ENCODE measurements at regions of chr2 and their contacts with region 1.

Region 1: DNA sequence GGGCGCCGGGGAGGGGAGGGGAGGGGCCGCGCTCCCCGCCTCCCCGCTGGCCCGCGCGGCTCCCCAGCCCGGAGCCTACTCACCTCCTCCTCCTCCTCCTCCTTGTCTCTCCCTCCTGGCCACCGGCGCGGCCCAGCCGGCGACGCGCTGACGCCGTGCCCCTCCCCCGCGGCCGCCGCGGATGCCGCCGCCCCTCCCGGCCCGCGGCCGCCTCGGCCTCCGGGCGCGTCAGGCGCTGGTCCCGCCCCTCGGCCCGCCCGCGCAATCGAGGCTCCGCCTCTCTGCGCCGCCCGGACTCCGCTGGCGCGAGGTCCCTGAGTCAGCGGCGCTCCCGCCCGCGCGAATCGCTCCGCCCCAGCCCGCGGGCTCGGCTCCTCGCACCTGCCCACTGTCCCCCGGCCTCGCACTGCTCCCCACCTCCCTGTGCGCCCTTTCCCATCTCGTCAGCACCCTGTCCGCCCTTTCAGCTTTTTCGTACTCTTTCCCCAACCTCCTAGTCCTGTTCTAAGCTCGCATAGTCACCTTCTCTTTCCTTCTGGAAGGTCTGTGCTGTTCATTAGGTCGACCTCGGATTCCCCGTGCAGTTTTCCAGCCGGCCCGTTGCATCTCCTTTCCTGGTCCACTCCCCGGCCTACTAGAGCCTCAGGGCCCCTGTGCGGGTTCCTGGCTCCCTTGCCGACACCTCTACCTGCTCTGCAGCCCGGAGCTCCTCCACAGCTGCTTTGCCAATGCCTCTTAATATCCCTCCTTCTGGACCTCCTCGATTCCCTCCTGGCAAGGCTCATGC is 187.4 kb downstream of the ZEB2 start:
- DNase-seq: peak; percentile 88
- H3K4me3 Mint-ChIP-seq: peak overlapping the region; percentile 85
- H3K27ac Mint-ChIP-seq: peak overlapping the region; percentile 95
- H3K4me1 Mint-ChIP-seq: peaks cover 46% of the 10 kb centered on the region
- H3K27me3 Mint-ChIP-seq: no peaks in the 10 kb centered on the region

Region 2: GRCh38 chr2:143730155-143730952 is 602.2 kb before region 1 on chr2:
- intact Hi-C with region 1: loop called (anchors 2 kb)
- DNase-seq: no peak
- H3K4me3 Mint-ChIP-seq: peak overlapping the region; percentile 9
- H3K27ac Mint-ChIP-seq: peak overlapping the region; percentile 67
- H3K4me1 Mint-ChIP-seq: peaks cover 24% of the 10 kb centered on the region
- H3K27me3 Mint-ChIP-seq: no peaks in the 10 kb centered on the region

Region 3: DNA sequence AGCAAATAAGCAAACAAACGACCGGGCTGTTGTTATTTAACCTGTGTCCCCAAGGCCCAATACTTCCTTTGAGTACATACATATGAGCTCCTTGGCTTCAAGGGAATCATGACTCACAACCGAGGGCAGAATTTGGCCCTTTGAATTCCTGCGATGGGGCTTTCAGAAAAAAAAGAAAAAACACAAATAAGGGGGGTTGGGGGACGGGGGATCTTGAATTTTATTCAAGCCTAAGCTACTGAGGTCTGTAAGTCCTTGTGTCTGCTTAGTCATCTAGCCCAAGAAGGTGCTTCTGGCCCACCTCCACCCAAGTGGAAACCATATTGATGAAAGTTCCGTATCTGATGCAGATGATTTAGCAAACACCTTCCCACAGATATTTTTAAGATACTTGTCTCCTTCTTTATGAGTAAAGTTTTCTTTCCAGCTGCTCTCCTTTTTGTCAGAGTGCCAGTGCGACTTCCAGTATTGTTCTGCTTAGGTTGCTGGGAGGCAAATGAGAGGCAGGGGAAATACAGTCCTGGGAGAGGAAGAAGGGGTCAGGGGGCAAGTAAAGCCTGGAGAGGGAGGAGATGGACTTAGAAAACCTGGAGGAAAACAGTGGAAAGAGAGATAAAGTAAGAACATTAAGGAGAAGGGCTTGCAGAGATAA is 17.7 kb after region 1 on chr2:
- intact Hi-C with region 1: loop called (anchors 2 kb)
- DNase-seq: no peak
- H3K4me3 Mint-ChIP-seq: peak overlapping the region; percentile 6
- H3K27ac Mint-ChIP-seq: peak overlapping the region; percentile 79
- H3K4me1 Mint-ChIP-seq: peaks cover 27% of the 10 kb centered on the region
- H3K27me3 Mint-ChIP-seq: no peaks in the 10 kb centered on the region

Region 4: DNA sequence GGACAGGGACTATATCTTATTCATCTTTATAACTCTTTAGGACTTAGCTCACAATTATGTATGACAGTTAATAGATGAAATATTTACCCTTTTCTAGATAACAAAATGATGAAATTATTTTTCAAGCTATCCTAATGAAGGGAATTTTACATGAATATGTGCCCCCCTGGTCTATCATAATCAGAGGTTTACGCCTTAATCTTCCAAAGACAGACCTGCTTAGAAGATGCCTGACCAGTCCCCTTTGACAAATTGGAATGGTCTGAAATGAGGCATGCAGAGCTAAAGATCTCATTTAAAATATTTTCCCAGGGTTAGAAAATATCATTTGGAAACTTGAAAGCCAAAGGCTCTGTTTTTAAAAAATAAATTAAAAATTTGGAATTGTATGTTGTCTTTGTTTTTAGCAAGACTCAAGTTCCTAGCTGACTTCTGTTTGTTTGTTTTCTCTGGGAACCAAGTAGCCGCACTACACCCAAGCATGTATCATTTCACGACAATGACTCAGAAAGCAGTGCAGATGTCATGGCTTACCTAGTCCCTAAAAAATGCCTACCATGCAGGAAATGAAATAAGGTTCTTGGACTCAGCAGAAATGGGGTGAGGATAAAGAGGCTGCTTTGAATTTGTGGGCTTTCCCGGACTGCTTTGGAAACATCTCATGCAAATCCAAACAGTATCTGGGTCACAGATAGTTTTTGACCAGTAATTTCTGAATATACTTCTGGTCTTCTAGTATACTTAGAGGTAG is 25.2 kb after region 1 on chr2:
- intact Hi-C with region 1: loop called (anchors 2 kb)
- DNase-seq: no peak
- H3K4me3 Mint-ChIP-seq: no peak overlapping the region
- H3K27ac Mint-ChIP-seq: peak overlapping the region; percentile 56
- H3K4me1 Mint-ChIP-seq: peaks cover 35% of the 10 kb centered on the region
- H3K27me3 Mint-ChIP-seq: no peaks in the 10 kb centered on the region

Region 5: DNA sequence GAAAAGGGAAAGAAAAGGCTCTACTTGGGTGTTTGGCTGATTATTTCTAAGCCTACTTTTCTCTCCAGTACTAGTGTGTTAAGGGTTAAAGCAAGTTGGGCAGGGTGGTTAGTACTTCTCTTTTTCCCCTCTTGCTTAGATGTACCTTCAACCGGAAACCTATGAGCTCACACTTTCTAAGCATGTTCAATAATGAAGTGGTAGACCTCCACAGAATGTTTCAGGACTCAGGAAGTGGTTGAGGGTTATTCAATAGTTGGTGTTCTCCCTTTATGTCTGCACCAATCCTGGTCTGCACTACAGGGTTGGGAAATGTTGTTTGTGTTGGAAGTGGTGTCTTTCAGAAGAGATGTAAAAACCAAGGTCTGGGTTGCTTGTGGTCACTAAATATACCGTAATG is 50.3 kb after region 1 on chr2:
- intact Hi-C with region 1: loop called (anchors 2 kb)
- DNase-seq: no peak
- H3K4me3 Mint-ChIP-seq: no peak overlapping the region
- H3K27ac Mint-ChIP-seq: peak overlapping the region; percentile 39
- H3K4me1 Mint-ChIP-seq: peaks cover 51% of the 10 kb centered on the region
- H3K27me3 Mint-ChIP-seq: peaks cover 2% of the 10 kb centered on the region